Endothelial cell of umbilical vein (primary cell): ENCODE measurements at regions of chr10 and their contacts with region 1.

Region 1: GRCh38 chr10:43922335-43923280 is 273.9 kb upstream of the ZNF32 start:
- DNase-seq: no peak
- H3K4me3 ChIP-seq: no peak overlapping the region
- H3K27ac ChIP-seq: no peak overlapping the region
- H3K4me1 ChIP-seq: no peaks in the 10 kb centered on the region
- H3K27me3 ChIP-seq: peaks cover 0 to 3% of the 10 kb centered on the region in 2 experiments
- CTCF ChIP-seq: no peak
- POLR2A ChIP-seq: no peak

Region 2: DNA sequence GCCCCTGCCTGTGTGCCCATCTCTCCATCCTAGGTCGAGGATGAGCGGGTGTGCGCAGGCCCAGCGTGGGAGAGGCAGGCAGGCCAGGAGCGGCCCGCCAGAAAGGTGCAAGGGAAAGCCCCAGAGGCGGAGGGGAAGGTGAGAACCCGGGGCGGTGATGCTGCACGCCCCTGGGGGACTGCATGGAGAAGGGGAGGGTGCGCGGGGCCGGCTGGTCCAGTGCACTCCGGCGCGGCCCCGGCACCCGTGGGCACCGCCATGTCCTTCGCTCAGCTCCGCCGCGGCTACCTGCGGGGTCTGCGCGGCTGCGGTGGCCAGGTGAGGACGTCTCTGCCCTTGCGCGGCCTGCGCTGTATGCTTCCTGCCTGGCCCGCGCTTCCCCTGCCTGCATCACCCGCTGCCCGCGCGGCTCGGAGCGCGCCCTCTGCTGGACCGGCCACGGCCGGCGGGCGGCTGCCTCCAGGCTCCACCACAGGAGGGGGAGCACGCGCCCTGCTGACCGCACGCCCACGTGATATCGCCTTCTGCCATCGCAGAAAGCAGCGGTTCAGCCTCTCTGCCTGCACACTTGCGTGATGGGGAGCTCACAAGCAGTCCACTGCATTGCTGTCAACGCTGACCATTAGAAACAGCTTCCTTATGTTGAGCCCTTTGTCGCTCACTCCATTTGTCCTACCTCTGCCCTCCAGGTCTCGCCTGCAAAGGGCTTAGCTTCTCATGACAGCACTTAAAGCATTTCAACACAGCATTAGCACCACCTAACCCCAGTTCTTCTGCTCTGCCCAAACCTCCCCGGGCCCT is 388.4 kb after region 1 on chr10:
- CTCF ChIA-PET with region 1: no interaction called
- POLR2A ChIA-PET with region 1: no interaction called
- dilution Hi-C with region 1: no loop called
- intact Hi-C with region 1: loop called (anchors 10 kb)
- DNase-seq: peak; percentile 53
- H3K4me3 ChIP-seq: no peak overlapping the region
- H3K27ac ChIP-seq: no peak overlapping the region
- H3K4me1 ChIP-seq: no peaks in the 10 kb centered on the region
- H3K27me3 ChIP-seq: no peaks in the 10 kb centered on the region
- CTCF ChIP-seq: peak; percentile 85 to 87
- POLR2A ChIP-seq: no peak